Mammary epithelial cell (primary cell): ENCODE measurements at regions of chr1 and their contacts with region 1.

Region 1: GRCh38 chr1:163933437-163933836 is 611.7 kb downstream of the NUF2 start:
- DNase-seq: no peak
- H3K4me3 ChIP-seq: no peak overlapping the region
- H3K27ac ChIP-seq: no peak overlapping the region
- H3K4me1 ChIP-seq: no peaks in the 10 kb centered on the region
- H3K27me3 ChIP-seq: no peaks in the 10 kb centered on the region
- CTCF ChIP-seq: no peak

Region 2: GRCh38 chr1:163875200-163875926 is 58.1 kb before region 1 on chr1:
- CTCF ChIA-PET with region 1: no interaction called
- dilution Hi-C with region 1: loop called (anchors 5 kb)
- in situ Hi-C with region 1: no loop called
- intact Hi-C with region 1: no loop called
- DNase-seq: no peak
- H3K4me3 ChIP-seq: no peak overlapping the region
- H3K27ac ChIP-seq: no peak overlapping the region
- H3K4me1 ChIP-seq: no peaks in the 10 kb centered on the region
- H3K27me3 ChIP-seq: no peaks in the 10 kb centered on the region
- CTCF ChIP-seq: no peak

Region 3: DNA sequence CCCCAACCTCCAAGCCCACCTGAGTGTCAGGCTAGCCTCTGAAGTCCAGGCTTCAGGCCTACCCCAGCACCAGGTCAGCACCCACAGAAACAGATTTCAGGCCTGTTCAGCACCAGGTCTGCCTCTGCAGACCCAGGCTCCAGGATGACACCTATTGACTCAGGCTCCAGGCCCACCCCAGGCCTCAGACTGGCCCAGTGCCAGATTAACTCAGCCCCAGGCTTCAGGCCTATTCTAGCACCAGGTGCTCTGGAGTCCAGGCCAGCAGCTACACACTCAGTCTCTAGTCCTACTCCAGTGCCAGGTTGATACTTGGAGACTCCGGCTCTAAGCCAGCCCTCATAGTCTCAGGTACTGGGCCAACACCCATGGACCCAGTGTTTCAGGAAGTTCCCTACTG is 83.8 kb after region 1 on chr1:
- CTCF ChIA-PET with region 1: no interaction called
- dilution Hi-C with region 1: no loop called
- in situ Hi-C with region 1: no loop called
- intact Hi-C with region 1: no loop called
- DNase-seq: no peak
- H3K4me3 ChIP-seq: no peak overlapping the region
- H3K27ac ChIP-seq: no peak overlapping the region
- H3K4me1 ChIP-seq: no peaks in the 10 kb centered on the region
- H3K27me3 ChIP-seq: no peaks in the 10 kb centered on the region
- CTCF ChIP-seq: no peak